HepG2 (cell line): ENCODE measurements at regions of chr6 and their contacts with region 1.

Region 1: GRCh38 chr6:161370880-161371279 is 97.0 kb upstream of the AGPAT4 start:
- DNase-seq: peak; percentile 60
- ATAC-seq: peak; percentile 80
- H3K4me3 ChIP-seq: no peak overlapping the region
- H3K27ac ChIP-seq: no peak overlapping the region
- H3K4me1 ChIP-seq: peaks cover 7% of the 10 kb centered on the region
- H3K27me3 ChIP-seq: 0 out of 5 replicates have a peak, but pooled peaks cover 0 to 4% of the 10 kb centered on the region in 2 experiments
- CTCF ChIP-seq: peak; percentile 96
- EP300 ChIP-seq: no peak
- POLR2A ChIP-seq: no peak
- RAD21 ChIP-seq: peak; percentile 81

Region 2: GRCh38 chr6:160750276-160750689 is 620.6 kb before region 1 on chr6:
- CTCF ChIA-PET with region 1: interaction called, 5 read pairs
- POLR2A ChIA-PET with region 1: no interaction called
- in situ Hi-C with region 1: loop called (anchors 25 kb)
- intact Hi-C with region 1: loop called (anchors 5 kb)
- DNase-seq: peak; percentile 18
- ATAC-seq: peak; percentile 93
- H3K4me3 ChIP-seq: no peak overlapping the region
- H3K27ac ChIP-seq: no peak overlapping the region
- H3K4me1 ChIP-seq: no peaks in the 10 kb centered on the region
- H3K27me3 ChIP-seq: no peaks in the 10 kb centered on the region
- CTCF ChIP-seq: peak; percentile 73
- EP300 ChIP-seq: no peak
- POLR2A ChIP-seq: no peak
- RAD21 ChIP-seq: peak; percentile 45; the same call in 1 of the 2 replicates

Region 3: DNA sequence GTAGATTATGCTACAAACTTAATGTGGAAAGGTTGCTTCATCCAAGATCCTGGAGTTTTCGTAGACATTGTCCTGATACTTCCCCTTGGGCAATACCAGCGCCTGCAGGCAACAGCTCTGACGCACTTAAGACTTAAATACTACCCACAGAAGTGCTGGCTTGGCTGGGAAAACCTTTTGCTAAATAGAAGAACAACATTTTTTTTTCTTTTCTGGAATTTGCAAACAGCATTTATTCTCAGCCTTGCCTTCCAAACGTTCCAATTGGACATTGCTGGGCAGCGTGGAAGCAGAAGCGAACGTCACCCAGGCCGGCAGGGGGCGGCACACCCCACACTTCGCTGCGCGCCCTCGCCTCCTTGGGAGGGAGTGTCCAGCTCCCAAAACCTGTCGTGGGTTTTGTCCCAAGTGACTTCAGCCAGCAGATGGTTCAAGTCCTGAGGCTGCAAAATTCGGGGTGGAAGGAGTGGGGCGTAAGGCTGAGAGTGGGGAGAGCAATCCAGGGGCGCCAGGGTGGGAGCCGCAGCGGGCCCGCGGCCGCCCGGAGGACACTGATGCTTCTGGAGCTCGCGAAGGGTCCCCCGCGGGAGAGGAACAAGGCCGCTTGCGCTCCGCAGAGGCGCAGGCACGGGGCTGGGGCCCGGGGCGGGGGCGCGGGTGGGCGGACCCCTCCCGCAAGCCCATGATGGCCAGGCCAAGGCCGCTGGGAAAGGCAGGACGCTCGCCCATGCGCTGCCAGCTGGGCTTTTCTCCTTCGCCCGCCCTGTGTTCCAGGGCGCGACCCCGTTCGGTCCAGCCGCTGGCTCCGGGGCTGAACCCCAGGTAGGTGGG is 440.1 kb before region 1 on chr6:
- CTCF ChIA-PET with region 1: interaction called, 48 read pairs
- POLR2A ChIA-PET with region 1: interaction called, 3 read pairs
- in situ Hi-C with region 1: loop called (anchors 5 kb)
- intact Hi-C with region 1: loop called (anchors 1 kb)
- DNase-seq: peak; percentile 30
- ATAC-seq: peak; percentile 95
- H3K4me3 ChIP-seq: peak overlapping the region; percentile 52 to 77 (median 54); a peak in 5 of 6 replicates
- H3K27ac ChIP-seq: no peak overlapping the region
- H3K4me1 ChIP-seq: peaks cover 10% of the 10 kb centered on the region
- H3K27me3 ChIP-seq: peaks cover 0 to 5% of the 10 kb centered on the region in 2 experiments; a peak in 3 of 5 replicates
- CTCF ChIP-seq: peak; percentile 99
- EP300 ChIP-seq: no peak
- POLR2A ChIP-seq: no peak
- RAD21 ChIP-seq: peak; percentile 93

Region 4: DNA sequence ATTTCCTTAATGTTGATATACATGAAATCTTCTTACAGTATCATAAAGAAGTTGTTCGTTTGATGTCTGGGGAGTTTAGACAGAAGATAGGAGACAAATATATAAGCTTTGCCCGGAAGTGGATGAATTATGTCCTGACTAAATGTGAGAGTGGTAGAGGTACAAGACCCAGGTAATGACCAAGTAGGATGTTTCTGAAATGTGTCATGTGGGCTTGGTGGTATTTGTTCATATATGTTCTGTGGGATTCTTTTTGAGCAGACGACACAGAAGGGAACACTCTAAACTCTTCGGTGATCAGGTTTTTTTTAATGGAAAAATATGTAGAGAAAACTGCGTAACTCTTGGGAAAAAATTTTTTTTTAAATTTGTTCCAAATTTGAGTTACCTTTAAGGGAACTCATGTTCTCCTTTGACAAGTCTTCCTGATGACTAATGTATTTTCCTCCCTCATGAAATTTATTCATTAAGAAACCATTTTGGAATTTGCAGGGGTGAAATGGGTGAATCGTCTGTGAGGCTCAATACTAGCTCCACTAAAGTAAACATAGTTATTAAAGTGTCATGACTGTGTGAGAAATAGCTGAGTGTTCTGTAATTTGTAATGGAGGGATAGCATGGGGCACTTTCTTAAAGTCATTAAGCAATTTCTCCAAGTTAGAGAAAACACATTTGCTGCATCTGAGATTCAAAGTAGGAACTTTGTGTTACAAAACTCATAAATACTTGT is 278.7 kb before region 1 on chr6:
- CTCF ChIA-PET with region 1: no interaction called
- POLR2A ChIA-PET with region 1: no interaction called
- in situ Hi-C with region 1: loop called (anchors 5 kb)
- intact Hi-C with region 1: no loop called
- DNase-seq: no peak
- ATAC-seq: no peak
- H3K4me3 ChIP-seq: no peak overlapping the region
- H3K27ac ChIP-seq: no peak overlapping the region
- H3K4me1 ChIP-seq: no peaks in the 10 kb centered on the region
- H3K27me3 ChIP-seq: no peaks in the 10 kb centered on the region
- CTCF ChIP-seq: no peak
- EP300 ChIP-seq: no peak
- POLR2A ChIP-seq: no peak
- RAD21 ChIP-seq: no peak

Region 5: GRCh38 chr6:161128680-161129196 is 242.1 kb before region 1 on chr6:
- CTCF ChIA-PET with region 1: no interaction called
- POLR2A ChIA-PET with region 1: no interaction called
- in situ Hi-C with region 1: no loop called
- intact Hi-C with region 1: no loop called
- DNase-seq: no peak
- ATAC-seq: no peak
- H3K4me3 ChIP-seq: no peak overlapping the region
- H3K27ac ChIP-seq: no peak overlapping the region
- H3K4me1 ChIP-seq: peaks cover 12% of the 10 kb centered on the region
- H3K27me3 ChIP-seq: no peaks in the 10 kb centered on the region
- CTCF ChIP-seq: no peak
- EP300 ChIP-seq: no peak
- POLR2A ChIP-seq: no peak
- RAD21 ChIP-seq: no peak

Region 6: DNA sequence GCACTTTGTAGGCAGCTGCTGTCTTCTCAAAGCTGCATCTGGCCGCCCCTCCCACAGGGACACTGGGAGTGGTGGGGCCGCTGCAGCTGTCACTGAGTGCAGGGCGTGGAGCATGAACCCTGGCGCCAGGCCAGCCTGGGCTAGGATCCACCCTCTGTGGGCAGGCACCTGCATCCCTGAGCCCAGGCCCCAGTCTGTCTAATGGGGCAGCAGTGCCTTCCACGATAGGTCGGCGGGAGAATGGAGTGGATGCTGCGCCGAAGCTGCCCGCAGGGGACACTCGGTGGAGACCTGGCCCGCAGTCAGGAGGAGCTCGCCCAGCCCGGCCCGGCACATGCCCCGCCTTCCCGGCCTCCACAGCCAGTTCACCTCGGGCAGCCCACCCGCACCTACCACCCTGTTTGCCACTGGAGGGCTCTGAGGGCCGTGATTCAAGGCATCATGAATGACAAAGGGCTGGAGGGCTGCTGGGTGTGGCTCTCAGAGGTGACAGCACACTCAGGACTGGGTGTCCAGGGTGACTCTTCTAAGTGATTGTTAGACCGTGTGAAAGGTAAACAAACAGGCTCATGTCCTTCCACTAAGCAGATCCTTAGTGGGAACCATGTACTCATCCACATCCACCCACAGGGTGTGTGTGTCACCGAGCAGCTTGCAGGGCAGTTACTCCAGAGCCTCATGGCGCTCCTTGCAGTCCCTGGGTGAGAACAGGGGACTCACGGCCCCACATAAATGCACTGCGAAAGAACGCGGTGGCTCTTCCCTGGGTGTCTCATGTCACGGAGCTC is 230.9 kb before region 1 on chr6:
- CTCF ChIA-PET with region 1: no interaction called
- POLR2A ChIA-PET with region 1: no interaction called
- in situ Hi-C with region 1: no loop called
- intact Hi-C with region 1: loop called (anchors 5 kb)
- DNase-seq: no peak
- ATAC-seq: peak; percentile 31
- H3K4me3 ChIP-seq: no peak overlapping the region
- H3K27ac ChIP-seq: no peak overlapping the region
- H3K4me1 ChIP-seq: peaks cover 45% of the 10 kb centered on the region
- H3K27me3 ChIP-seq: no peaks in the 10 kb centered on the region
- CTCF ChIP-seq: no peak
- EP300 ChIP-seq: no peak
- POLR2A ChIP-seq: no peak
- RAD21 ChIP-seq: no peak

Region 7: GRCh38 chr6:161301338-161301737 is 69.5 kb before region 1 on chr6:
- CTCF ChIA-PET with region 1: no interaction called
- POLR2A ChIA-PET with region 1: no interaction called
- in situ Hi-C with region 1: no loop called
- intact Hi-C with region 1: no loop called
- DNase-seq: no peak
- ATAC-seq: no peak
- H3K4me3 ChIP-seq: no peak overlapping the region
- H3K27ac ChIP-seq: no peak overlapping the region
- H3K4me1 ChIP-seq: no peaks in the 10 kb centered on the region
- H3K27me3 ChIP-seq: peaks cover 0 to 20% of the 10 kb centered on the region in 2 experiments; a peak in 3 of 5 replicates
- CTCF ChIP-seq: no peak
- EP300 ChIP-seq: no peak
- POLR2A ChIP-seq: no peak
- RAD21 ChIP-seq: no peak